ENCODE measurements at regions of chr1 and their contacts with region 1.

Region 1: DNA sequence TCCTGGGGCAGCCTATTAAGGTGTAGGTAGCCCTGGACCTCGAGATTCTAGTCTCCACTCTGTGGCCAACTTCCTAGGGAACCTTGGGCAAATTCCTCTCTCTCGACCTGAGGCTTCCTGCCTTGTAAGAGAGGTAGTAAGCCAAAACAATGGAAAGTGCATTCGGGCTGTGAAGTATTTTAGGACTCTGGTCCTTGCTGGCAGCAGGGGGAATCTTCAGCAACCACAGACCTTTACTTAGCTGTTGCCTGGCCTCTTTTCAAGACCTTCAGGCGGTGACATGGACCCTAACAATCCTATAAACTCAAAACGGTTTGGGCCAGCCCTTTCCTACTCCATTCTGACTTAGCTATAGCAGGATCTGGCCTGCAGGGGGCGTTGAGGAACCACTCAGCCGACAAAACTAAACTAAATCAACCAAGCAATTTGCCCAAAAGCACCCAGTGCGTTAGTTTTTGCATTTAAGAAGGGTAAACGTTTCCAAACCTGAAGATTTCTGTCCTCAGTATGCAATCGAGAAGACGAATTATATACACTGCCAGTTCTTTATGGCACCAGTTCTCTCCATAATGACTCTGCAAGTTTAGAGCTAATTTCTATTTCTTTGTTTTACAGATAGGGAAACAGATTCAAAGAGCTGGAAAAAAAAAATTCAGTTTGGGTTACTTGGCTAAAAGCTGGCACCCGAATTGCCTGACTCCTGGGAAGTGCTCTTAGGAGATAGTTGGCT is 10.9 kb upstream of the SESN2 start:
- DNase-seq: peak; percentile 87
- H3K4me3 Mint-ChIP-seq: peak overlapping the region; percentile 82
- H3K27ac Mint-ChIP-seq: peak overlapping the region; percentile 96
- H3K4me1 Mint-ChIP-seq: peaks cover 52% of the 10 kb centered on the region
- H3K27me3 Mint-ChIP-seq: no peaks in the 10 kb centered on the region

Region 2: GRCh38 chr1:28235755-28236655 is 12.4 kb before region 1 on chr1 and contains the start of gene ATP5IF1:
- CTCF ChIA-PET with region 1: interaction called, 77 read pairs
- POLR2A ChIA-PET with region 1: interaction called, 100 read pairs
- DNase-seq: peak; percentile 96
- H3K4me3 Mint-ChIP-seq: no peak within 1 kb of the TSS
- H3K27ac Mint-ChIP-seq: no peak within 1 kb of the TSS
- H3K4me1 Mint-ChIP-seq: peaks cover 25% of the 10 kb centered on the region
- H3K27me3 Mint-ChIP-seq: no peaks in the 10 kb centered on the region
- total RNA-seq, gene ATP5IF1: 178 TPM

Region 3: DNA sequence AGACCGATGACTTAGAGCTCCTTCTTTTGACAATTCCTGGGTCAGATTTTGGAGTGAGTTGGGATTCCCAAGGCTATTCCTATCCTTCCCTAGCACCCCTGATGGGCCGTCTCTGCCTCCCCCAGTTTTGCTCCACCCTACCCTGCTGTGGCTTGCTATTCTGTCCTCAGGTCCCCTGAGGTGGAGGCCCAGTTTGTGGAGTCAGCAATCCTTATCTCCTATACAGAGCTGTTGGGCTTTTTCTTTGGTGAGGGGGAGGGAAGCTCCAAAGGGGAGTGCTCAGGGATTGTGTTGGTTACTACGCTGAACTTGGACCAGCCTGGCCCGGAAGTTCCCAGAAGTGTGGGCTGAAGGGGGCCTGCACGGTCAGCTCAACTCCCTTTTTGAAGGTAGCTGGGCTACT is 18.5 kb after region 1 on chr1:
- CTCF ChIA-PET with region 1: interaction called, 42 read pairs
- POLR2A ChIA-PET with region 1: interaction called, 159 read pairs
- DNase-seq: no peak
- H3K4me3 Mint-ChIP-seq: no peak overlapping the region
- H3K27ac Mint-ChIP-seq: no peak overlapping the region
- H3K4me1 Mint-ChIP-seq: peaks cover 10% of the 10 kb centered on the region
- H3K27me3 Mint-ChIP-seq: no peaks in the 10 kb centered on the region

Region 4: DNA sequence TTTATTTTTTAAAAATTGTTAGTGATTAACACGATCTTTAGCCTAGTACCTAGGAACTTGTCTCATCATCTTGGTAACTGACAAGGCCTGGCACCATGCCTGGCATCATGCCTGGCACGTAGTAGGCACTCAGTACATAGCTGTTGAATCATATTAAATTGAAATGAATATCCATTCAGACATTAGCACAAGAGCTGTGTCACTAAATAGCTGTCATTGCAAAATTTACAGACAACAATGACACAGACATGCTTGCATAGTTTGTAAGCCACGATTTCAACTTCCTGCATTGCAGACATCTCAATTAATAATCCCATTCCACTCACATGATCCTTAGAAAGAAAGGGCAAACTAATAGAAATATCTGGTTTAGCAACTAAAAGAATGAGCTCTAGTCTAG is 105.7 kb after region 1 on chr1:
- CTCF ChIA-PET with region 1: interaction called, 34 read pairs
- POLR2A ChIA-PET with region 1: interaction called, 4 read pairs
- DNase-seq: no peak
- H3K4me3 Mint-ChIP-seq: no peak overlapping the region
- H3K27ac Mint-ChIP-seq: no peak overlapping the region
- H3K4me1 Mint-ChIP-seq: peaks cover 8% of the 10 kb centered on the region
- H3K27me3 Mint-ChIP-seq: no peaks in the 10 kb centered on the region

Region 5: DNA sequence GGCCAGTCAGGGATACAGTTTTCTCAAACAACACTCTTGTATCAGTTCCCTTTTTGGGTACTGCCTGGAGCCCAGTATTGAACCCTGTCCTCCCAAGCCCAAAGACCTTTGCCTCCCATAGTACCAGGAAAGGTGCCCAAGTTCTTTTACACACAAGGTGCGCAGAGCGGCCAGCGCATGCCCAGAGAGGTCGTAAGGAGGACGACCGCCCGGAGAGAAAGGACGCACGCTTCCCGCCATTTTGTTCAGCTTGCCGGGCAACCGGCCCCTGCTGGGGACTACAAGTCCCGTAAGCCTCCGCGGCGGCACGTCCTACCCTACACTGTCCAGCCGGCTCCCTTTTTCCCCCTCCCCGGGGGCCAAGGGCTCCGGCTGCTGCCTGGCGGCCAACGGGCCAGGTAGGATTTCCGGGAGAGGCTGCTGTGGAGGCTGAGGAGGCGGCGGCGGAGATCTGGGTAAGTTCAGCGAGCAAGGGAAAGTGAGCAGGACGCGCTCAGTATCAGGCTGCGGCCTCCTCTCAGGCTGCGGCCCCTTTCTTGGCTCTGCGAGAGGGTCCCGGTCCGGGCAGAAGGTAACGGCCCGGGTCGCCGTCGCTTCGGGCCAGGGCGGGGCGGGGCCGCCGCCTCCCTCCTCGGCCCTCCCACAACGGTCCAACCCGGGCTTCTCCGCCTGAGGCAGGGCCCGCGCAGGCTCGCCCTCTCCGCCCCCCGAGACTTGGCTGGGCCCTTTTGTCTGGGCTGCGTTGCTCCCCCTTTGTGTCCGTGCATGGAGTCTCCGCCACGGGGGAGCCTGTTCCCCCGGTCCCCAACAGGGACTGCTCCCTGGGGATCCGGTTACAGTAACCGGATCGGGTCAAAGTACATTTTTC is 121.2 kb after region 1 on chr1 and contains the start of gene PHACTR4:
- CTCF ChIA-PET with region 1: interaction called, 31 read pairs
- POLR2A ChIA-PET with region 1: interaction called, 23 read pairs
- DNase-seq: peak; percentile 85
- H3K4me3 Mint-ChIP-seq: peak within 1 kb of the TSS; percentile 96
- H3K27ac Mint-ChIP-seq: peak within 1 kb of the TSS; percentile 83
- H3K4me1 Mint-ChIP-seq: peaks cover 32% of the 10 kb centered on the region
- H3K27me3 Mint-ChIP-seq: no peaks in the 10 kb centered on the region
- total RNA-seq, gene PHACTR4: 24.8 to 25.7 TPM

Region 6: GRCh38 chr1:28505406-28506187 is 257.1 kb after region 1 on chr1 and contains the start of gene RCC1:
- CTCF ChIA-PET with region 1: interaction called, 9 read pairs
- POLR2A ChIA-PET with region 1: interaction called, 74 read pairs
- DNase-seq: peak; percentile 97
- H3K4me3 Mint-ChIP-seq: peak within 1 kb of the TSS; percentile 98
- H3K27ac Mint-ChIP-seq: peak within 1 kb of the TSS; percentile 97
- H3K4me1 Mint-ChIP-seq: peaks cover 42% of the 10 kb centered on the region
- H3K27me3 Mint-ChIP-seq: no peaks in the 10 kb centered on the region
- total RNA-seq, gene RCC1: 47.6 to 50.7 TPM